ENCODE measurements at regions of chr11 and their contacts with region 1.

Region 1: GRCh38 chr11:74321487-74322188 is 10.2 kb upstream of the P4HA3 start:
- DNase-seq: no peak
- ATAC-seq: peak; percentile 6

Region 2: GRCh38 chr11:74255741-74256369 is 65.8 kb before region 1 on chr11:
- intact Hi-C with region 1: loop called (anchors 2 kb)
- DNase-seq: no peak
- ATAC-seq: peak; percentile 50

Region 3: DNA sequence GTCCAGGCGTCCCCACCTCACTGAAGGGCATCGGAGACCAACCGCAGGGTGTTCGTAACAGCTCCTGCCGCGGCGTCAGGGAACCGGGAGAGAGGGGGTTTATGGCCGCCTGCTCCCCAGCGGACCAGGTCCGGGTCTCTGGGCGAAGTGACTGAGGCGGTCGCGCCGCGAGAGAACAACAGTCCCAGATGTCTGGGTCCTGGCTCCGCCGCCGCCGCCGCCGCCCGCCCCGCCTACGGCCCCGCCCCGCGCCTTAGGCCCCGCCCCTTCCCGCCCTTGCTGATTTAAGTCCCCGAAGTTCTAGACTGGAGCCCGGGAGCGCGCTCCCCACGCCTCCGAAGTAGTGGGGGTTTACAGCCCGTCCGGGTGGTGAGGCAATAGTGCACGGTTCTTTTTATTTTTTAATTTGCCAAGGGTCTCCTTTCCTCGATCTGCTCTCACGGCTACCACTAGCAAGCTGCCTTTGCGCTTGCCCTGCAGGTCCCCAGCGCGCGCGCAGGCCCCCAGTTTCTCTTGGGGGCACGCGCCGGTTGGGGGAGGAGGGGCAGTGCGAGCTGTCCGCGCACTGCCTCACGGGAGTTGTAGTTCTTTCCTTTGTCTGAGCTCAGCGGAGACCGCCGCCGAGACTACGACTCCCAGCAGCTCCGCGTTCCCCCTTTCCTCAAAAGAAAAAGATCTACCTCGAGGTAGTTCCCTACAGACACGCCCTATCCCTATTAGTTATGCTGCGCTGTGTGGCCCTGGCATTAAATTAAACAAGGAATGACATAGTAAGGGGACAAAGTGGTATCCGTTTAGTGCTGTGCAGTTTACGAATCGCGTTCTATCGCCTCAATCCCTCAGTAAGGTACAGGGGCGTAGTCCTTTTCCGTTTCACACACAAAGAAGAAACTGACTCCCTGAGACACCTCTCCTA is 76.9 kb after region 1 on chr11 and contains the start of gene PGM2L1:
- intact Hi-C with region 1: loop called (anchors 5 kb)
- DNase-seq: peak; percentile 94
- ATAC-seq: peak; percentile 98
- total RNA-seq, gene PGM2L1: 2.1 TPM

Region 4: DNA sequence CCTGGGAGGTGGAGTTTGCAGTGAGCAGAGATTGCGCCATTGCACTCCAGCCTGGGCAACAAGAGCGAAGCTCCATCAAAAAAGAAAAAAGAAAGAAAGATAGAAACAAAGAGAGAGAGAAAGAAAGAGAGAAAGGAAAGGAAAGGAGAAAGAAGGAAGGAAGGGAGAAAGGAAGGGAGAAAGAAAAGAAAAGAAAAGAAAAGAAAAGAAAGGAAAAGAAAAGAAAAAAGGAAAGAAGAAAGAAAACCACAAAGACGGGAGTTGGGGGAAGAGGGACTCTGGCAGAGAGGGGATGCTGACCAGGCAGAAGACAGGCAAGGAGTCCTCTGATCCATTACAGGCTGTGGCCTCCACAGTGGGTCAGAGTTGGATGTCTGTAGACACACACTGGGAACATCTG is 810.4 kb after region 1 on chr11:
- intact Hi-C with region 1: no loop called
- DNase-seq: no peak
- ATAC-seq: no peak